Posterior cingulate gyrus (tissue), 11 donors: ENCODE measurements at regions of chr3 and their contacts with region 1.

Region 1: DNA sequence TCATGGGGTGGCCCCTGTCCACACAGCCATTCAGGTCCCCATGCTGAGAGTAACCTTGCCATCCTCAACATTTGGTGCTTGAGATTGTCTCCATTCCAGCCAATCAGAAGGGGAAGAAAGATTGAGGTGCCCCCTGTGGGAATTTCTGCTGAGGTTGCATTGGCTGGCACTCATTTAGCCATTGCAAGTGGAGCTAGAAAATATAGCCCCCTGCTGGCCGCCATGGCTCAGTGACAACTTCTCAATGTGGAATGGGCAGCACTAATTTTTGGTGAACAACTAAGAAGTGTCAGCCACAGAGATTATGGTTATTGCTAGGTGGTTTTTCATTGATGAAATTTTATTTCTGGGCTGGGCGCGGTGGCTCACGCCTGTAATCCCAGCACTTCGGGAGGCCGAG is 22.0 kb downstream of the COL6A6 start:
- DNase-seq: peak in 6 of 10 donors; percentile 32 to 87 (median 43)

Region 2: GRCh38 chr3:130276203-130276803 is 262.7 kb before region 1 on chr3:
- intact Hi-C with region 1: loop called (anchors 5 kb)
- DNase-seq: peak in 1 of 10 donors; percentile 16

Region 3: GRCh38 chr3:131174752-131175151 is 635.7 kb after region 1 on chr3:
- intact Hi-C with region 1: no loop called
- DNase-seq: no peak